ENCODE measurements at regions of chr15 and their contacts with region 1.

Region 1: GRCh38 chr15:25385986-25386385 is 52.8 kb downstream of the UBE3A start:
- DNase-seq: no peak
- ATAC-seq: no peak
- H3K4me3 ChIP-seq: no peak overlapping the region
- H3K27ac ChIP-seq: no peak overlapping the region
- H3K4me1 ChIP-seq: peaks cover 0 to 7% (median under 1%) of the 10 kb centered on the region in 9 donors
- H3K27me3 ChIP-seq: no peaks in the 10 kb centered on the region
- CTCF ChIP-seq: no peak

Region 2: GRCh38 chr15:25438601-25439368 is 52.8 kb after region 1 on chr15 and contains the start of gene UBE3A:
- intact Hi-C with region 1: loop called in 1 of 10 experiments (anchors 10 kb)
- DNase-seq: peak; percentile 89 to 94
- ATAC-seq: peak; percentile 97 to 99 (median 98)
- H3K4me3 ChIP-seq: peak within 1 kb of the TSS; percentile 71 to 100 (median 94)
- H3K27ac ChIP-seq: peak within 1 kb of the TSS; percentile 95 to 100 (median 99)
- H3K4me1 ChIP-seq: peaks cover 3 to 42% (median 30%) of the 10 kb centered on the region in 9 donors
- H3K27me3 ChIP-seq: no peaks in the 10 kb centered on the region
- CTCF ChIP-seq: peak in 7 of 9 donors; percentile 9 to 50 (median 32)
- total RNA-seq, gene UBE3A: 101 to 146 (median 112) TPM

Region 3: GRCh38 chr15:25582886-25583285 is 196.9 kb after region 1 on chr15:
- intact Hi-C with region 1: no loop called
- DNase-seq: no peak
- ATAC-seq: no peak
- H3K4me3 ChIP-seq: no peak overlapping the region
- H3K27ac ChIP-seq: no peak overlapping the region
- H3K4me1 ChIP-seq: no peaks in the 10 kb centered on the region
- H3K27me3 ChIP-seq: no peaks in the 10 kb centered on the region
- CTCF ChIP-seq: no peak